Prostate gland (tissue), 2 donors: ENCODE measurements at regions of chr9 and their contacts with region 1.

Region 1: GRCh38 chr9:99819856-99820684 is 1.6 kb upstream of the NR4A3 start:
- DNase-seq: peak; percentile 85
- H3K4me3 ChIP-seq: peak overlapping the region; percentile 76 to 77
- H3K27ac ChIP-seq: peak overlapping the region; percentile 97 to 98
- H3K4me1 ChIP-seq: peaks cover 8% of the 10 kb centered on the region
- H3K27me3 ChIP-seq: no peaks in the 10 kb centered on the region
- CTCF ChIP-seq: peak in 2 of 4 experiments; percentile 14 to 20
- POLR2A ChIP-seq: peak; percentile 47

Region 2: DNA sequence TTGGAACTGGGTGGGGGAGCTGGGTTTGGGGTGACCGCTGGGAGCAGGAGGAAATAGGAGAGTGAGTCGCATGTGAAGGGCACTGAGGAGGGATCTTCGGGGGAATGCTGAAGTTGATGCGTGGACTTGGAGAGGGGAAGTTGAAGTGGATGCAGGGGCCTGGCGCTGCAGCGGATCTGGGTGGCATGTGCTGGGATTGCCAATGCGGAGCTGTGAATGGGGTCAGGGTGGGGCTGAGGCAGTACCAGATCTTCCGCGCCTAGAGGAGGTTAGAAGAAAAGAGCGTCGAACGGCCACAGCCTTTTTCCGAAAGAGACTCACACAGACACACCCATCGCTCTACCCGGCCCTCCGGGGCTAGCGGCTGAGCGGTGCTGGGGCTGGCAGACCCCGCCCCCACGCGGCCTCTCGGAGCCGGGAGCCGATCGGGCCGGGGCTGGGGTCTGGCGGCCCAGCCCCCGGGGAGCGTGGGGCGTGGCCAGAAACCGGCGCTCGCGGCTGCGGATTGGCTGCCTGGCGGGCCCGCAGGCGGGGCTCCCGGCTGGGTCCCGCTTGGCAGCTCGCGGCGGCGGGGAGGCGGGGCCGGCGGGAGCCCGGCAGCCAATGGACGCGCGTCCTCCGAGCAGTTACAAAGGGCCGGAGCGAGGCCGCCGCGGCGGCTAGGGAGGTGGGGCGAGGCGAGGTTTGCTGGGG is 715.5 kb before region 1 on chr9 and contains the start of gene TGFBR1:
- intact Hi-C with region 1: loop called (anchors 10 kb)
- DNase-seq: peak; percentile 93
- H3K4me3 ChIP-seq: peak within 1 kb of the TSS; percentile 80
- H3K27ac ChIP-seq: peak within 1 kb of the TSS; percentile 86 to 88
- H3K4me1 ChIP-seq: peaks cover 4% of the 10 kb centered on the region
- H3K27me3 ChIP-seq: no peaks in the 10 kb centered on the region
- CTCF ChIP-seq: peak in 3 of 4 experiments; percentile 8 to 39 (median 31)
- POLR2A ChIP-seq: peak; percentile 86
- total RNA-seq, gene TGFBR1: 22.2 to 25.5 TPM

Region 3: GRCh38 chr9:99259231-99259918 is 560.7 kb before region 1 on chr9:
- intact Hi-C with region 1: loop called (anchors 10 kb)
- DNase-seq: peak; percentile 57
- H3K4me3 ChIP-seq: peak overlapping the region; percentile 17 to 22
- H3K27ac ChIP-seq: peak overlapping the region; percentile 25 to 56
- H3K4me1 ChIP-seq: no peaks in the 10 kb centered on the region
- H3K27me3 ChIP-seq: no peaks in the 10 kb centered on the region
- CTCF ChIP-seq: no peak
- POLR2A ChIP-seq: peak; percentile 21

Region 4: DNA sequence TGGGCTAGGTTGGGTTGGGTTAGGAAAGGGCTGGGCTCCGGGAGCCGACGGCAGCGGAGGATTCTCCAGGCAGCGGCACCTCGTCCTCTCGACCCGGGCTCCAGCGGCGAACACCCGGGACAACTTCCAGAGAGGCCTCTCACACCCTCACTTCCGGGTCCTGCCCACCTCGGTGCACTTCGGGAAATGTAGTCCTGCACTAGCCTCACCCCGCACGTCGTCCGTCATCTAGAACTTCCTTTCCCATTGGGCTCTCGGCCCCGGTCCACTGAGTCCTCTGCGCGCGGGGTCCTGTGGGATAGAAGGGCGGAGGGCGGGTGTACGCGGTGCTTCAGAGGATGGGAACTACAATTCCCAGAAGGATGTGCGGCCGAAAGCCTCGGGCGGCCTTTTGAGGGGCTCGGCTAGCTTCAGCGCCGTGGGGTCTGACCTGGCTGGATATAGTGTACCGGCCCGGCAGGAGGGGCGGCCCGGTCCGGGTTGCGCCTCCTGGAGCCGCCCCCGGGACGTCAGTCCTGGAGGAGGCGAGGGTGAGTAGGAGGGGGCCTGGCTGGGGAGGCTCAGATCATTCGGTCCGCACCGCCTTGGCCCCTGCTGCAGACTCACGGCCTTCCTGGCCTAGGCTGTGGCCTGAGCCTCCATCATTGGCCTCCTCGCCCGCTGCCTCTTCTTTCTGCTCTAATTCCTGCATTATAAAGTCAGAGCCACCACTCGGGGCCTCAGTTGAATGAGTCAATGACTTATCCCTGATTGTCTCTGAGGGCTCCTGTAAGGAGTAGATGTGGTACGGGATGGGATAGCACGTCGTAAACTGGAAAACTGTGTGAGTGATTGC is 279.0 kb after region 1 on chr9 and contains the starts of genes ERP44 and INVS:
- intact Hi-C with region 1: loop called (anchors 10 kb)
- DNase-seq: peak; percentile 100
- H3K4me3 ChIP-seq: peak within 1 kb of the TSS; percentile 90 to 91
- H3K27ac ChIP-seq: peak within 1 kb of the TSS; percentile 83
- H3K4me1 ChIP-seq: peaks cover 17% of the 10 kb centered on the region
- H3K27me3 ChIP-seq: no peaks in the 10 kb centered on the region
- CTCF ChIP-seq: no peak
- POLR2A ChIP-seq: peak; percentile 69
- total RNA-seq, gene ERP44: 16.6 to 20.6 TPM
- total RNA-seq, gene INVS: 17.7 to 29.7 TPM

Region 5: GRCh38 chr9:100322954-100323536 is 503.0 kb after region 1 on chr9:
- intact Hi-C with region 1: loop called (anchors 10 kb)
- DNase-seq: peak; percentile 20
- H3K4me3 ChIP-seq: no peak overlapping the region
- H3K27ac ChIP-seq: no peak overlapping the region
- H3K4me1 ChIP-seq: no peaks in the 10 kb centered on the region
- H3K27me3 ChIP-seq: no peaks in the 10 kb centered on the region
- CTCF ChIP-seq: peak; percentile 13 to 69 (median 62)
- POLR2A ChIP-seq: no peak